HepG2 (cell line): ENCODE measurements at regions of chr9 and their contacts with region 1.

Region 1: DNA sequence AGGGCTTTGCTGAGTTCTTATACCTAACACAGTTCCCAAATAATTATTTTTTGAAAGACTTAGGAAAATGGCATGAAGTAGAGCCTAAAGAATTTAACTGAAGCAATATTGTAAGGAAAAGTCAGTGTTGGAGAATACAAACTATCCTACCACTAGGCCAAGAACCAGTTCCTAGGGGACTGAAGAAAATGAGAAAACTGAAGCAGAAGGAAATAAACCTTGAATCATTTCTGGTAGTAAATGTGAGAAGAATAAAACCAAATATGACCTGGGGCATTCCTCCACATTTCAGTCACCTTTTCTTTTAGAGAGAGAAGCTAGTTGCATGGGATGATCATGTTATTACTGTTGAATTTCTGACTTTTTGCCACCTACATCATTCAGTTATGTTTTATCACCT is 1393.9 kb upstream of the C9orf72 start:
- DNase-seq: no peak
- ATAC-seq: no peak
- H3K4me3 ChIP-seq: no peak overlapping the region
- H3K27ac ChIP-seq: no peak overlapping the region
- H3K4me1 ChIP-seq: no peaks in the 10 kb centered on the region
- H3K27me3 ChIP-seq: no peaks in the 10 kb centered on the region
- CTCF ChIP-seq: no peak
- EP300 ChIP-seq: no peak
- POLR2A ChIP-seq: no peak
- RAD21 ChIP-seq: no peak

Region 2: GRCh38 chr9:28234894-28235277 is 732.3 kb before region 1 on chr9:
- CTCF ChIA-PET with region 1: no interaction called
- POLR2A ChIA-PET with region 1: no interaction called
- in situ Hi-C with region 1: no loop called
- intact Hi-C with region 1: no loop called
- DNase-seq: no peak
- ATAC-seq: no peak
- H3K4me3 ChIP-seq: no peak overlapping the region
- H3K27ac ChIP-seq: no peak overlapping the region
- H3K4me1 ChIP-seq: no peaks in the 10 kb centered on the region
- H3K27me3 ChIP-seq: no peaks in the 10 kb centered on the region
- CTCF ChIP-seq: no peak
- EP300 ChIP-seq: no peak
- POLR2A ChIP-seq: no peak
- RAD21 ChIP-seq: no peak

Region 3: DNA sequence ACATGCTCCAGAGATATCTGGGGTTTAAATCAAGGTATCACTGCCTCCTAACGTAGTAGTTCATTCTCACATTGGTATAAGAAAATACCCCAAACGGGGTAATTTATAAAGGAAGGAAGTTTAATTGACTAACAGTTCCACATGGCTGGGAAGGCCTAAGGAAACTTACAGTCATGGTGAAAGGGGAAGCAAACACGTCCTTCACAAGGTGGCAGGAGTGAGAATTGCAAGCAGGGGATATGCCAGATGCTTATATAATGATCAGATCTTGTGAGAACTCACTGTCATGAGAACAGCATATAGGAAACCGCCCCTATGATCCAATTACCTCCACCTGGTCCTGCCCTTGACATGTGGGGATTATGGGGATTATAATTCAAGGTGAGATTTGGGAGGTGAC is 113.7 kb before region 1 on chr9:
- CTCF ChIA-PET with region 1: no interaction called
- POLR2A ChIA-PET with region 1: no interaction called
- in situ Hi-C with region 1: no loop called
- intact Hi-C with region 1: no loop called
- DNase-seq: no peak
- ATAC-seq: no peak
- H3K4me3 ChIP-seq: no peak overlapping the region
- H3K27ac ChIP-seq: no peak overlapping the region
- H3K4me1 ChIP-seq: no peaks in the 10 kb centered on the region
- H3K27me3 ChIP-seq: no peaks in the 10 kb centered on the region
- CTCF ChIP-seq: no peak
- EP300 ChIP-seq: no peak
- POLR2A ChIP-seq: no peak
- RAD21 ChIP-seq: no peak

Region 4: DNA sequence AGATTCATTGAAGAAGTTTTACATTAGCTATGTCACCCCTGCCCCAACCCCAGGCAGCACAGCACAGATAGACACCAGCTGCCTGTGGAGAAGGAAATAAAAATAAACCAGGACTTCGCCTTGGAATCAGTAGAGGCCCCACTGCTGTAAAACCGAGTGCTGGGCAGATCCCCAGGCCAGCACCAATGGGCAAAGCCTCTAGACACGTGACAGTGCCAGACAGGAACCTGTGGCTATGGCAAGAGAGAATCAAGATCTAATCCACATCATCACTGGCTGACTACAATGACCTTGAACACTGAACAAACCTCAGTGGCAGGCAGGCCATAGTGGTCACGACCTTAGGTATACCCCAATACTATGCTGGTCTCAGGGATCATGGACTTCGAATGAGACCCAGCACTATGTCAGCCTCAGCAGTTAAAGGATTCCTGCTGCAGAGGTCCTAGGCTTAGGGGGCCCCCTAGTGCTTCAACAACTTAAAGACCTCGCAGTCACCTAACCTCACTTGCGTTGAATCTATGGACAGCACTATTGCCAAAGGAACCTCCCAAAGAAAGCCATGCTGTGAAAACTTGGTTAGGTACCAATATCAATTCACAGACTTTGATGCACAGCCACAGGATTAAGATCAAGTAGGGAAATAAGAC is 724.7 kb after region 1 on chr9:
- CTCF ChIA-PET with region 1: no interaction called
- POLR2A ChIA-PET with region 1: no interaction called
- in situ Hi-C with region 1: no loop called
- intact Hi-C with region 1: loop called (anchors 10 kb)
- DNase-seq: peak; percentile 36
- ATAC-seq: peak; percentile 96
- H3K4me3 ChIP-seq: no peak overlapping the region
- H3K27ac ChIP-seq: no peak overlapping the region
- H3K4me1 ChIP-seq: no peaks in the 10 kb centered on the region
- H3K27me3 ChIP-seq: no peaks in the 10 kb centered on the region
- CTCF ChIP-seq: peak; percentile 61
- EP300 ChIP-seq: no peak
- POLR2A ChIP-seq: no peak
- RAD21 ChIP-seq: no peak